Activated naive CD4-positive, alpha-beta T cell treated with anti-CD3 and anti-CD28 coated beads for 36 hours (primary cell): ENCODE measurements at regions of chr21 and their contacts with region 1.

Region 1: DNA sequence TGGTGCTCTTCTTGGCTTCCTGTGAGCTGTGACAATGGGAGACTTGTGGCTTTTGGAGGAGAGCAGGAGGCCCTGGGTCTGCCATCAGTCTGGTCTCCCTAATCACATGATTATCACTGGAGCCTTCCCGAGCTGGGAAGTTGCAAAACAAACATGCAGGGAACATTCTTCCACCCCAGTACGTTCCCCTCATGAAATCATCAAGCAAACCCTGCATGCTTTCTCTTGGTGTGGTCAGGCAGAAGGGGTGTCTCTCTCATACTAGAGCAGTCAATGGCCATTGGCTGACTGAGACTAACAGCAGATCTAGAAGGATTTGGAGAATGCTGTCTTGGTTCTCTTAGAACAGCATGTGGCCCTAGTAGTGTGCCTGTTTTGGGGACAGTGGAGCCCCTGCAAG is 111.2 kb downstream of the LIPI start:
- DNase-seq: no peak
- H3K4me3 Mint-ChIP-seq: no peak overlapping the region
- H3K27ac Mint-ChIP-seq: no peak overlapping the region
- H3K4me1 Mint-ChIP-seq: no peaks in the 10 kb centered on the region
- H3K27me3 Mint-ChIP-seq: no peaks in the 10 kb centered on the region

Region 2: DNA sequence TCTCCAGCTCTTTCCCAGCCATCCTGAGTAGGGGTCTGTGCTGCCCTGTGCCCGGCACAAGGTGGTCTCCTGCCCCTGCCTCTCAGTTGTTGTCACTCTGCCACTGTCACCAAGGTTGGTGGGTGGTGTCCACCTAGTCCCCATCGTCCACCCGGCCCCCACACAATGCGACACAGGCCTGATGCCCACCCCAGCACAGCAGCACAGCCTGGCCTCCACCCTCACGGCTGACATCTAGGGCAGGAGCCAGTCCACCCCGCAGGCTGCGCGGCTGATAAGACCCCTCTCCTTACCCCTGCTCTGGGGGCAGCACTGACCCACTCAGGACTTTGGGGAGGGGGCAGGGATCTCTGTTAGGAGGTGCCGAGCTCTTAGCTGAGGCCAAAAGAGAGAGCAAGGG is 87.2 kb before region 1 on chr21:
- CTCF ChIA-PET with region 1: no interaction called
- intact Hi-C with region 1: no loop called
- DNase-seq: no peak
- H3K4me3 Mint-ChIP-seq: no peak overlapping the region
- H3K27ac Mint-ChIP-seq: no peak overlapping the region
- H3K4me1 Mint-ChIP-seq: no peaks in the 10 kb centered on the region
- H3K27me3 Mint-ChIP-seq: no peaks in the 10 kb centered on the region

Region 3: DNA sequence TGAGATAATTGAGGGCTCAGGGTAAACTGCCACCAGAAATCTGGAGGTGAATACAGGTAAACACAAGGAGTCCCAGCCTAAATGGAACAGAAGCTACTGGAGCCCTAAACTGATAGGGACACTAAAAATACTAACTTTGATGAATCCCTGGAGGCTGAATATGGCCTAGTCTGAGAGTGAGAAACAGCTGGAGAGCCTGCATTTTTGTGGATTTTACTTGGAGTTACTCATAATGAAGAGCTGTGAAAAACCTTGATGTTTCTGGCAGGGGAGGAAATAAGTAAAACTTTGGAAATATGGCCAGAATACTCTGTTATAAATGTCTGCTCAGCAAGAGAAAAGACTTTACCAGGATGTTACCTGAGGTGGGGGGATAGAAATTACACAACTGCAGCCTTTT is 53.2 kb before region 1 on chr21:
- CTCF ChIA-PET with region 1: no interaction called
- intact Hi-C with region 1: no loop called
- DNase-seq: no peak
- H3K4me3 Mint-ChIP-seq: no peak overlapping the region
- H3K27ac Mint-ChIP-seq: no peak overlapping the region
- H3K4me1 Mint-ChIP-seq: peaks cover 4% of the 10 kb centered on the region
- H3K27me3 Mint-ChIP-seq: no peaks in the 10 kb centered on the region

Region 4: DNA sequence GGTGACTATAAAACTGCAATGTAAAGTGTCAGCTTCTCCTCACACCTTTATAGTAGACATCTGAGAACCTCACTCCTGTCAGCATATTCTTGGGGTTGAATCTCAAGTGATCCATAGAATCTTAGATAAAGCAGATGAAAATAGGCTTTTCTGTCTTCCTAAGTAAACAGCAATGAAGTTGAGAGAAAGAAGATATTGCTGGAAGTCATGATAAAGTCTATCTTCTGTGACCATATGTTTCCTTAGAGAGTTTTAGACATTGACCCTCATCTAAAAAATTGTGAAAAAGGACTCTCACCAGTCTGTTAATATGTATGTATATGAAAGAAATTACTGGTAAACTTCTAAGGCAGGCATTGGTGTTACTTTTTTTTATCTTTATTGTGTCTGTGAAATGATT is 44.4 kb after region 1 on chr21:
- CTCF ChIA-PET with region 1: no interaction called
- intact Hi-C with region 1: loop called (anchors 10 kb)
- DNase-seq: no peak
- H3K4me3 Mint-ChIP-seq: no peak overlapping the region
- H3K27ac Mint-ChIP-seq: no peak overlapping the region
- H3K4me1 Mint-ChIP-seq: no peaks in the 10 kb centered on the region
- H3K27me3 Mint-ChIP-seq: peaks cover 4% of the 10 kb centered on the region